Motor neuron (in vitro differentiated cells): ENCODE measurements at regions of chr7 and their contacts with region 1.

Region 1: DNA sequence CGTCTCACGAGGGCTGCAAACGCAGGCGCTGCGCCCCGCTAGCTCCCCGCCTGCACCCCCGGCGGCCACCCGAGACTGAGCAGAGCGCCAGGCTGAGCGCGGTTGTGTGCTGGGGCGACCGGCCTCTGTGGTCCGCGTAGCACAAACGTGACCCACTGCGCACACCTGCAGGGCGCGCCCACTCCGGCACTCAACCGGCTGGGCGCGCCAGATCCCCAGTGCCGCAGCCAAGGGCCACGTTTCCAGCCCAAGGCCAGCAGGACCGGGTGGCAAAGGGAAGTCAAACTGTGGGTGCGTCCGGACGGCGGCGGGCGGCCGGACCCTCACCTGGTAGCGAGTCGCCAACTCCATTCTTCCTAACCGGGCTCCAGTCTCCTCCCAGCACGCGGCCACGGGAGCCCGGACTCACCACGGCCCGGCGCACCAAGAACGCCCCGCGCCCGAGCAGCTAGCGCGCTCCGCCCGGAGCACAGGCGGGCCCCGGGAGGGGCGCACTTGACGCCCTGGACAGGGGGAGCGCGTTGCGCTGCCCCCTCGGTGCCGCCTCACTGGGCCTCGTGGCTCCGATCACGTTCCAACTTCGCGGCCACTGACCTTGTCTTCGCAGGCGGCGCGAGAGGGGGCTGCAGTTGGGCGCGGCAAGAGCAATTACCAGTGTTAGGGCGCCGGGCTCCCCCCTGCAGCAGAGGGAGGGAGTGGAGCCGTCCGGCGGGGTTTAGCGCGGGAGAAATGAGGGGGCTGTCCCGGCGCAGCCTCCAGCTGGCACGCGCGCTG is at the start of gene CDCA7L:
- ATAC-seq: peak; percentile 91 to 95 (median 94)
- H3K4me3 ChIP-seq: peak within 1 kb of the TSS; percentile 53 to 62 (median 61)
- H3K27ac ChIP-seq: peak within 1 kb of the TSS in 1 of 2 donors; percentile 84
- H3K4me1 ChIP-seq: peaks cover 17 to 22% of the 10 kb centered on the region in 2 donors
- total RNA-seq, gene CDCA7L: 13.0 to 36.2 (median 15.7) TPM

Region 2: GRCh38 chr7:22082886-22083703 is 137.5 kb after region 1 on chr7:
- in situ Hi-C with region 1: loop called in 1 of 9 experiments (anchors 25 kb)
- ATAC-seq: peak; percentile 86 to 97 (median 96)
- H3K4me3 ChIP-seq: peak overlapping the region; percentile 43 to 80 (median 53)
- H3K27ac ChIP-seq: peak overlapping the region; percentile 73 to 89
- H3K4me1 ChIP-seq: peaks cover 6 to 10% of the 10 kb centered on the region in 2 donors